Left ventricle myocardium superior (tissue), 1 donor: ENCODE measurements at regions of chr1 and their contacts with region 1.

Region 1: DNA sequence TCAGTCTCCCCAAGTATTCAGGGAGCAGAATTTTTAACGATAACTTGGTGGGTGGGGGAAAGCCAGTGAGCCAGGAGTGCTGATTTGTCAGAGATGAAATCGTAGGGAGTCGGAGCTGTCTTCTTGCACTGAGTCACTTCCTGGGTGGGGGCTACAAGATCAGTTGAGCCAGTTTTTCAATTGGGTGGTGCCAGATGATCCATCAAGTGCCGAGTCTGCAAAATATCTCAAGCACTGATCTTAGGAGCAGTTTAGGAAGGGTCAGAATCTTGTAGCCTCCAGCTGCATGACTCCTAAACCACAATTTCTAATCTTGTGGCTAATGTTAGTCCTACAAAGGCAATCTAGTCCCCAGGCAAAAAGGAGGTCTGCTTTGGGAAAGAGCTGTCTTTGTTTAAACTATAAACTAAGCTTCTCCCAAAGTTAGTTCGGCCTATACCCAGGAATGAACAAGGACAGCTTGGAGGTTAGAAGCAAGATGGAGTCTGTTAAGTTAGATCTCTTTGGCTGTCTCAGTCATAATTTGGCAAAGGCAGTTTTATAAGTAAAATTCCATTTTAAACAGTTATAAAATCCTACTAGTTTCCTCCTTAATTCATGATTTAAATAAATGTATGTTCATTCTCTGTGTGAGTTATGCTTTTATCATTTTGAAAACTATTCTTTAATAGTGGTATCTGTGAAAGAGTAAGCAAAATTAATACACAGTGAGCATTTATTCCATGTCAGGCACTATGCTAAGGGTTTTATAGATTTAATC is 51.7 kb downstream of the SLC16A1 start:
- DNase-seq: no peak
- ATAC-seq: no peak

Region 2: GRCh38 chr1:112955781-112956543 is 51.7 kb after region 1 on chr1 and contains the start of gene SLC16A1:
- intact Hi-C with region 1: loop called (anchors 10 kb)
- DNase-seq: peak; percentile 97
- ATAC-seq: peak; percentile 96
- total RNA-seq, gene SLC16A1: 123 TPM

Region 3: DNA sequence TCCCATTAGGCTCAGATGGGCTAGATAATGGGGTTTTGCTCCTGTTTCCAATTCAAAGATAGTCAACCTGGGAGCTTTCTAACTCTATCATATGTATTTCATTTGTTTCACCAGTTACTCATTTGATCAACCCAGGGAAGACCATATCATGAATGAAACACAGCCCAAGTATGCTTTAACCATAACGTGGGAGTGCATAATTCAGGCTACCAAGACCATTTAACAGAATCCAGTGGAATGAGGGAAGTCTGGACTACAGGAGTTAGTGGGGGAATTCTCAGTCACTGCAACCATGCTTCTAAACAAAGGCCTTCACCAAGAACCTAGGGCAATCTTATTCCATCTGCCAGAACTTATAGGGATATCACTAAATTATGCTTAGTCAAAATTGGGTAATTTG is 66.8 kb after region 1 on chr1:
- intact Hi-C with region 1: no loop called
- DNase-seq: no peak
- ATAC-seq: no peak